Panc1 (cell line): ENCODE measurements at regions of chr4 and their contacts with region 1.

Region 1: DNA sequence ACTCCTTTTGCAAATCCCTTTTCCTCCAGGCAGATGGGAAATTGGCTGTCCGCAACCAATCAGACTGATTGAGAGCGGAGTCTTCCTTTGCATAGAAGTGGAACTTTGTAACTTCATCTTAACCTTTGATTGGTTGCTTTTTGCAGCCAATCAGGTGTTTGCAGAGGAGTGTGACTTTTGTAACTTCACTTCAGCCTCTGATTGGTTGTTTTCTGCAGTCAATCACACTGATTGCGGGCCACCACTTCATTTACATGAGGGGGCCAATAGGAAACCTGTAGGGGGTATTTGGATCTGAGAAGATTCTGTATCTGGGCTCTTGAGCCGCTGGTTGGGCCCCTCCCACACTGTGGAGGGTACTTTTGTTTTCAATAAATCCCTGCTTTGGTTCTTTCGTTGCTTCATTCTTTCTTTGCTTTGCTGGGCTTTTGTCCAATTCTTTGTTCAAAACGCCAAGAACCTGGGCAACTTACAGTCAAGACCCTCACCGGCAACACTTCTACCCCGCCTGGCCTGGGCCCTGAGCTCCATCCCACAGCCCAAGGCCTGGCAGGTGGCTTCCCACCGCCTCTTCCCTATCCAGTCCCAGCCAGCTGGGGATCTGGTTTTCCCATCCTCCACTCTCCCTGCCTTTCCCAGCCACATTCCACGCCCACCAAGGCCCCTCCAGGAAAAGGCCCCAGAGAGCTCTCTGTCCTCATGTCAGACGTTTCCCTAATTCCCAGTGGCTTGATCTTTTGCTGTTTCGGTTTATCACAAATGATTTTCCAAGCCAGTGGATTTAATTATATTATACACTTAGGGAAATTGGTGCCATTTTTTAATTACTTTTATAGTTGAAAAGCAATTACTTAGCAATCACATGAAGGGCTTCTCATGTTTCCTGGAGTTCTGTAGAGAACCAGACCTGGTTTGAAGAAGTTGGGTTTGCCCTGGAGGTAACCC is 110.2 kb upstream of the STX18 start:
- DNase-seq: no peak
- ATAC-seq: no peak
- H3K4me3 ChIP-seq: no peak overlapping the region
- H3K27ac ChIP-seq: no peak overlapping the region
- H3K4me1 ChIP-seq: no peaks in the 10 kb centered on the region
- H3K27me3 ChIP-seq: no peaks in the 10 kb centered on the region
- CTCF ChIP-seq: no peak

Region 2: DNA sequence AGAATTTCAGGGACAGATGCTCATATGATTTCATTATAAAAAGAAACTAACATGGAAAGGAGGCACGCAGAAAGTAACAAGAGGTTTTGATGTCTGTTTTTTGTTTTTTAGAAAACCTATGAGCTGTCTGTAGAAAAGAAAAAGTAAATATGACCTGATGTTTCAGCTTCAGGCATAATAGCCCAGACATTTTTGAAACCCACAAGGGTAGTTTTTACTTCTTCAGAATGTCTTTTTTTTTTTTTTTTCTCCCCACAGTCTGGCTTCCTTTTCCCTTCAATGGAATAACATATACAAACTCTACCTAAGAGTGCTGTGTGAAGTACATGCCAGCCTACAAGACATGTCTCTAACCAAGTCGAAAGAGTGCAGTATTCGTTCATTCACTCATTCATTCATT is 91.9 kb before region 1 on chr4:
- CTCF ChIA-PET with region 1: interaction called, 10 read pairs
- POLR2A ChIA-PET with region 1: no interaction called
- in situ Hi-C with region 1: no loop called
- intact Hi-C with region 1: no loop called
- DNase-seq: no peak
- ATAC-seq: no peak
- H3K4me3 ChIP-seq: no peak overlapping the region
- H3K27ac ChIP-seq: no peak overlapping the region
- H3K4me1 ChIP-seq: no peaks in the 10 kb centered on the region
- H3K27me3 ChIP-seq: no peaks in the 10 kb centered on the region
- CTCF ChIP-seq: no peak

Region 3: DNA sequence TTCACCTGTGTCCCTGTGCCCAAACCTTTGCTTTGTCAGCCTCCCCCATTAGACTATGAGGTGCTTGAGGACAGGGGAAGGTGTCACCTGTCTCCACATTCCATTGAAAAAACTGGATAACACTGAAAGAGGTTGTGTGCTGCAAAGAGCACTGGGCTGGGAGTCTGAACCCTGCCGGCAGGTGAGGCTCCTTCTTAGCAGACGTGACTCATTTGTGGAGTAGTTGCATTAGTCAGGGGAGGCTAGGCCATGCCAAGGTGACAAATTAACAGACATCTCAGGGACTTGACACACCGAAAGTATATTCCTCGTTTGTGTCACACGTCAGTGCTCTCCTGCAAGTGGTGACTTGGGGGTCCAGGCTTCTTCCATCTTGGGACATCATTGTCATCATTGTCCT is 14.4 kb before region 1 on chr4:
- CTCF ChIA-PET with region 1: no interaction called
- POLR2A ChIA-PET with region 1: no interaction called
- in situ Hi-C with region 1: no loop called
- intact Hi-C with region 1: no loop called
- DNase-seq: no peak
- ATAC-seq: no peak
- H3K4me3 ChIP-seq: no peak overlapping the region
- H3K27ac ChIP-seq: no peak overlapping the region
- H3K4me1 ChIP-seq: peaks cover 6% of the 10 kb centered on the region; the same call in 1 of the 2 replicates
- H3K27me3 ChIP-seq: no peaks in the 10 kb centered on the region
- CTCF ChIP-seq: no peak

Region 4: GRCh38 chr4:4719436-4719835 is 67.4 kb after region 1 on chr4:
- CTCF ChIA-PET with region 1: interaction called, 11 read pairs
- POLR2A ChIA-PET with region 1: no interaction called
- in situ Hi-C with region 1: no loop called
- intact Hi-C with region 1: no loop called
- DNase-seq: no peak
- ATAC-seq: no peak
- H3K4me3 ChIP-seq: no peak overlapping the region
- H3K27ac ChIP-seq: no peak overlapping the region
- H3K4me1 ChIP-seq: no peaks in the 10 kb centered on the region
- H3K27me3 ChIP-seq: no peaks in the 10 kb centered on the region; the same call in 1 of the 2 replicates
- CTCF ChIP-seq: no peak